ENCODE measurements at regions of chr9 and their contacts with region 1.

Region 1: GRCh38 chr9:111975709-111976108 is 79.1 kb downstream of the UGCG start:
- DNase-seq: peak; percentile 63
- H3K4me3 ChIP-seq: no peak overlapping the region
- H3K27ac ChIP-seq: no peak overlapping the region
- H3K4me1 ChIP-seq: no peaks in the 10 kb centered on the region
- H3K27me3 ChIP-seq: no peaks in the 10 kb centered on the region
- CTCF ChIP-seq: no peak

Region 2: DNA sequence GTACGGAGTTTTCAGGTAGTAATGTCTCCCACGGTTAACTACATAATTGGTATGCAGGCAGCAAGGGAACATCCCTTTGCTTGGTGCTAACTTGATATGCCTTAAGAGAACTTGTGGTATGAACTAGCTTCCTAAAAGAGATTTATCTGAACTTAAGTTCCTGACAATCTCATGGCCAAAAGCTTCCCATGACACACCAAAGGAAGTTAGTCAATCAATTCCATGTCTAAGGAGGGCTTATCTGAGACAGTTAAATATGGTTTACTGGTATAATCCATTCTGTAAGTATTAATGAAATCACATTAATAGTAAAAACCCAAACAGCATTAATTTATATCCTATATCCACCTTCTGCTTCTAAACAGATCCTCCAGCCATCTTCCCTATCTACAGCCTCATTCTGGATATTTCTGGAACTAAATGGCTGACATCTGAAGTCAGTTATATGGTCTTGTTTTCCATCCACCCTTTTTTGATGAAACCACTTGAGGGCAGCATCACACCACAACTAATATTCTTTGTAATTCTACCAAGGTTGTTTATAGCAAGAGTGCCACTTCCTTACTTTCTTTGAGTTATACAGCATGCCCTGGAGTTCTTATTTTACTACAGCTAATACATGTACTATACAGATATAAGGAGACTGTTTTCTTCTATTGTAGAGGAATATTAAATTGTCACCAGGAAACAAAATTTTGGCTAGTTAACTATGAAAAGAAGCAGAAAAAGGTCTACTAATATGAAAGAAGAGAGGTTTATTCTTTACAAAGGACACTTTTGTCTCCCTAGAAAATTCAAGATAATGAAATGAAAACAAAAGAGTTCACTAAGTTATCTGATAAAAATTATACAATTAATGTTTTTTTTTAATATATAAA is 215.7 kb before region 1 on chr9:
- intact Hi-C with region 1: loop called (anchors 10 kb)
- DNase-seq: peak; percentile 71
- H3K4me3 ChIP-seq: no peak overlapping the region
- H3K27ac ChIP-seq: no peak overlapping the region
- H3K4me1 ChIP-seq: no peaks in the 10 kb centered on the region
- H3K27me3 ChIP-seq: no peaks in the 10 kb centered on the region
- CTCF ChIP-seq: peak; percentile 48

Region 3: DNA sequence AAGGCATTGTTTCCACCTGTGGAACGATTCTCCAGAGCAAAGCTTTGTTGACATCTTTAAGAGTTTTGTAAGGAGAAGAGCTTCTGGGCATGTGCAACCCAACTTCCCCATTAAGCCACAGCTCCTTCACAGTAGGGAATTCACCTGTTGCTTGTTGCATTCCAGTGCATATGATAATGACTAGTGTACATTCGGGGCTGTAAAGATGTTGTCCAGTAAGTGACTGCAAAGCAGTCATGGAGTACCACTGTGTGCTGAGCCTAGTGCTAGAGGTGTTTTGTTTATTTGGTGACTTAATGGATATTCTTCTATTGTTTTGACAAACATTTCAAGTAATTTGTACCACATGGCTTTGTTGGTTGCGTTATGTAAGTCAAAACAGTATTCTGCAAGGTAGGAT is 66.3 kb before region 1 on chr9:
- intact Hi-C with region 1: no loop called
- DNase-seq: no peak
- H3K4me3 ChIP-seq: no peak overlapping the region
- H3K27ac ChIP-seq: no peak overlapping the region
- H3K4me1 ChIP-seq: peaks cover 6% of the 10 kb centered on the region
- H3K27me3 ChIP-seq: no peaks in the 10 kb centered on the region
- CTCF ChIP-seq: no peak

Measured in colonic mucosa (tissue), 4 donors.